HepG2 (cell line): ENCODE measurements at regions of chr12 and their contacts with region 1.

Region 1: DNA sequence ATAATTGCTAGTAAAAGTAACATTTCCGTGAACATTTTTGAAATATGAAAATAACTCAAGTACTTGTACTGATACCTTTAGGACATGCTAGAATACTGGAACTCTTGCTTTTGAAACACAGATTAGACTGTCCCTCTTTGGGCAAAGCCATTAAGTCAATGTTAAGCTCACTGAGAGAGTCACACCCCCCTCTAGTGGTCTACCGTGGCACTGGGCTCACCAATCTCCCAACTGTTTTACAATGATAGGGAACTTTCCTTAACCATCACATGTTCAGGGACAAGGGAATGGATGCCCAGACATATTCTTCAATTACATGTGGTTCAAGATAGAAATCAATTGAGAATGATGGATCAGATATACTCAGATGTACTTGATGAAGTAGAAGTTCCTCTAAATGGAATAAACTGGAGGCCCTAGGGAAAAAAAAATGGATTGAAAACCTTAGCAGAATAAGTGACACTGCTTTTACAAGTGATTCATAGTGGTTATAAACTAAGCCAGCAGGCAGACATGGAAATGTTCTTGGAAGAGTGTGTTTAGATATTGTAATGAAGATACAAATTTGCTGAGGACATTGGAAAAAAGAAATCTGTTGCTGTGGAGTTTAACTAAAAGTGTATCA is 17.8 kb downstream of the NANOG start:
- DNase-seq: peak; percentile 64
- ATAC-seq: peak; percentile 87
- H3K4me3 ChIP-seq: no peak overlapping the region
- H3K27ac ChIP-seq: no peak overlapping the region
- H3K4me1 ChIP-seq: no peaks in the 10 kb centered on the region
- H3K27me3 ChIP-seq: no peaks in the 10 kb centered on the region
- CTCF ChIP-seq: peak; percentile 92
- EP300 ChIP-seq: no peak
- POLR2A ChIP-seq: no peak
- RAD21 ChIP-seq: peak; percentile 82

Region 2: GRCh38 chr12:7678738-7679137 is 128.2 kb before region 1 on chr12:
- CTCF ChIA-PET with region 1: interaction called, 44 read pairs
- POLR2A ChIA-PET with region 1: no interaction called
- in situ Hi-C with region 1: loop called (anchors 5 kb)
- intact Hi-C with region 1: loop called (anchors 1 kb)
- DNase-seq: no peak
- ATAC-seq: no peak
- H3K4me3 ChIP-seq: no peak overlapping the region
- H3K27ac ChIP-seq: no peak overlapping the region
- H3K4me1 ChIP-seq: 0 out of 2 replicates have a peak, but pooled peaks cover 4% of the 10 kb centered on the region
- H3K27me3 ChIP-seq: peaks cover 0 to 3% of the 10 kb centered on the region in 2 experiments; a peak in 1 of 5 replicates
- CTCF ChIP-seq: no peak
- EP300 ChIP-seq: no peak
- POLR2A ChIP-seq: no peak
- RAD21 ChIP-seq: no peak

Region 3: GRCh38 chr12:7716381-7716780 is 90.6 kb before region 1 on chr12:
- CTCF ChIA-PET with region 1: interaction called, 5 read pairs
- POLR2A ChIA-PET with region 1: no interaction called
- in situ Hi-C with region 1: loop called (anchors 10 kb)
- intact Hi-C with region 1: loop called (anchors 1 kb)
- DNase-seq: peak; percentile 55
- ATAC-seq: peak; percentile 81
- H3K4me3 ChIP-seq: no peak overlapping the region
- H3K27ac ChIP-seq: no peak overlapping the region
- H3K4me1 ChIP-seq: no peaks in the 10 kb centered on the region
- H3K27me3 ChIP-seq: no peaks in the 10 kb centered on the region; a peak in 1 of 5 replicates
- CTCF ChIP-seq: peak; percentile 68
- EP300 ChIP-seq: no peak
- POLR2A ChIP-seq: no peak
- RAD21 ChIP-seq: 0 out of 2 replicates have a peak, but pooled peaks have one; percentile 13

Region 4: DNA sequence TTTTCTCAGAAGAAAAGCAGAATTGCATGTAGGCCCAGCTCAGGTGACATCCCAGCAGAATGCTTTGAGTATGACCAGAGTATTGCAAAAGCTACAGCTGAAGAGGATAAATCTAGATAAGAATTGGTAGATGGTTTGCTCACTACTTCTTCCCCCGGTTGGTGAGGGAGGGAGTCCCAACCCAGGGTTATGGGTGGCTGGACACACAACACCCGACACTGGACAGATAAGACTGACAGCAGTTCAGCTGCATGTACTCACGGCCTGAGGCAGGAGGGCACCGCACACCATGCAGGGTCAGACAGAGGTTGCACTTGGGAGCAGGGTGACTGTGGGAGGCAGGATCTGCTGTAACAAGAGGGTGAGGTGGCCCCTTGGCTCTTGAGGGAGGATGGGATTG is 58.1 kb before region 1 on chr12:
- CTCF ChIA-PET with region 1: no interaction called
- POLR2A ChIA-PET with region 1: no interaction called
- in situ Hi-C with region 1: no loop called
- intact Hi-C with region 1: no loop called
- DNase-seq: no peak
- ATAC-seq: no peak
- H3K4me3 ChIP-seq: no peak overlapping the region
- H3K27ac ChIP-seq: no peak overlapping the region
- H3K4me1 ChIP-seq: no peaks in the 10 kb centered on the region
- H3K27me3 ChIP-seq: peaks cover 0 to 4% of the 10 kb centered on the region in 2 experiments; a peak in 1 of 5 replicates
- CTCF ChIP-seq: no peak
- EP300 ChIP-seq: no peak
- POLR2A ChIP-seq: no peak
- RAD21 ChIP-seq: no peak